ENCODE measurements at regions of chr2 and their contacts with region 1.

Region 1: GRCh38 chr2:43461453-43462073 is 134.3 kb downstream of the THADA start:
- DNase-seq: no peak

Region 2: DNA sequence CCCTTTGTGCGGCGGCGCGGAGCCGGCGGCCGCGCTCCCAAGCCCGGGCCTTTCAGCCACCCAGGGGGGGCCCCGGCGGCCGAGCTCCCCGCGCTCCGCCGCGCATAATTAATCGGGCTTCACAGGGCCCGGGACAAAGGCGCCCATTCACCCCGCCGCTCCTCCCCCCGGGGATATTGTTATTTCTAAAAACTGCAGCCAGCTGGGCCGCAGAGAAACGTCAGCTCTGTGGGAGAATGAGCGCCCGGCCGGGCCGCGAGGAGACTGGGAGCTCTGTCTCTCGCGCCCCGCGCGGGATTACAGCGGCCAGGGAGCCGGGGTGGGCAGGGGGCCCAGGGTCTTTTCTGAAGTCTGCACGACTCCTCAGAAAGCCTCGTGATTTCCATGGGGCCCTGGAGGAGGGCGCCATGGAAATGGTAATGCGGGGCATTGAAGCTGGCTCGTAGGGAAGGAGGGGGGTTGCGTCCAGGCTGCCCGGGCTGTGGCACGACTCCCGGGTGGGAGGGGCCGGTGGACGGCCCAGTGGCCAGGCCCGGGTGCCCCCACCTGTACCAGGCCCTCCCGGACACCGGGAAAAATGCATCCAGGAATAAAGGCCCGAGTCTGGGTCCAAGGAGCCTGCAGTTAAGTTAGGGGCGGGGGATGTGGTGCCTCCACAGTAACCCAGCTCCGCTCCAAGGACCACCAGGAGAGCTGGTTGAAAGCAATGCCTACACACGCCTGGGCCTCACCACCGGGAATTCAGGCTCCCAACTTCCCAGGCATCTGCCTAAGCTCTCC is 360.5 kb before region 1 on chr2:
- intact Hi-C with region 1: no loop called
- DNase-seq: peak; percentile 89

Region 3: DNA sequence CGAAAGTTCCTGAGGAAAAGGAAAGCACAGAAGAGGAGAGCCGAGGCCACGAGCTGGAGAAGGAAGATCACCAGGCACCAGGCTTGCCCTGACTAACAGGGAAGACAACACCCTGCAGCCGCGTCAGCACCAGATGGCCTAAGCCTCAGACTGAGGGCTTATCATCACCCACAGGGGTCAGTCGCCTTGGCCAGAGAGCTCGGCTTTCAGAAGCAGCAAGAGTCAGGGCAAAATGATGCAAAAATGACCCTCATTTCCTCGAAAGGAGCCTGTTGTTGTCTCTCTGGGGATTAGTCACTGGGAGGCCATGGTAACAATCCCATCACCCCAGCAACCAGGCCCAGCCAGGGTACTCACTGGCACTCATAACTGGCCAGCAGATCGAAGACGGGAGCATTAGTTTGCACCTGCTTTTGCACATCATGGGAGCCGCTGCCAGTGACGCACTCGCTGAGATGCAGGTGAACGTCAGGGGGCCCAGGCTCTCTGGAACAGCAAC is 192.4 kb before region 1 on chr2:
- intact Hi-C with region 1: loop called in 1 of 2 experiments (anchors 10 kb)
- DNase-seq: peak; percentile 98

Region 4: DNA sequence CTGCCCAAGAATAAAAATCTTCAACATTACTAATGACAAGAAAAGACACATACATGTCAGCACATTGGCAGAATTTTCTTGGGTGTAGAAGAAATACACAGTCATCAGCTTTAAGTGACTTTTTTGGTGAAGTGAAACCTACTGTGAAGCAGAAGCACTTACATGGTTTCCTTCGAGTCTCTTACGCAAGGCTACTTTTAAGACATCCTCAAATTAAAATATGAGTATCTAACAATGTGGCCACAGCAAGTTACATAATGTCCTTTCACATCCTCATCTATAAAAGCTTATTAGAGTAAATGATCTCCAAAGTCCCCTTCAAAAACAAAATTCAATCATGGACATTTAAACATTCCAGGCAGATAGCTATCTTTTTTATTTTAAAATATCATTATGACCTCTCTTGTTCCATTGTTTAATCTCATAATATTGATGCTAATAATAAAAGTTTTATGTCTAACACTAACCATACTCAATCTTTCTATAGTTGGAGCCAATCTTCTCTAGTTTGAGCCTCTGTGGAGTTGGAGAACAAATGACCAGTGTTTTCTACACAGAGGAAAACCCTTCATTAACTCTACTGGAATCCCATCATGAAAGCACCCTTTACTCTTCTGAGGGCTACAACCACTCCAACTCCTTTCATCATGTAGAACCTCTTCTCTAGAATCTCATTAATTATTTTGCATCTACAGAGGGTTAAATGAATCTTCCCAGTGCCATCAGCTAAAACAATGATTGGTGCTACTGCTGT is 53.0 kb before region 1 on chr2:
- intact Hi-C with region 1: loop called (anchors 5 to 10 kb)
- DNase-seq: no peak

Measured in posterior vena cava (tissue), 2 donors.